HCT116 (cell line): ENCODE measurements at regions of chr6 and their contacts with region 1.

Region 1: DNA sequence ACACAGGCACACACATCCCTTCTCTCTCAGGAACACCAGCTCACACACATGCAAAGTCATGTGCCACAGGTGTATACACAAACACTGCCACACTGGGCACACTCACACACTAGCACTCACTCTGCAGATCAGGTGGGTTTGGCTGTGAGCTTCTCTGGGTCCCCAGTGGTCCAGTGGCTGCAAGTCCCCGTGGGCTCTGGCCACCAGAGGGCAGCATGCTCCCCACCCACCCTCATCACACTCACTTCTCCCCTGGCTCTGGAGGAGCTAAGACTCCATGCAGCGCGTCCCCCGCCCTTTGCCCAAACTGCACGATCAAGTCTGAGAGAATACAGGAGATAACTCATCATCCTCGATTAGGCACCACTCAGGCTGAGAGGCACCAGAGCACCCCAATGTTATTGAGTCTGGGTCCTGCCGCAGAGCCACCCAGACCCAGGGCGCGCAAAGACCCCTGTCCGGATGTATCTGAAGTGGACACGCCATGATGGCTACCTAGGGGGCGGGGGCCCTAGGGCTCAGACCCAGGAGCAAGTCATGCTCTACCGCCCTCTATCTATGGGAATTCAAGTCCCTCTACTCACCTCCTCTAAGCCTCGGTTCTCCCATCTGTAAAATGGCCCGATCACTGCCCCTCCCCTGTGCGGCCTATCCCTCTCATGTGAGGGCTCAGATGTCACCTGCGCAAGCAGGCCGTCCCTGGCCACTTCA is 90.5 kb downstream of the GRM4 start:
- DNase-seq: peak; percentile 55
- ATAC-seq: peak; percentile 77
- H3K4me3 ChIP-seq: no peak overlapping the region
- H3K27ac ChIP-seq: no peak overlapping the region
- H3K4me1 ChIP-seq: peaks cover 8 to 21% of the 10 kb centered on the region in 2 experiments; a peak in 3 of 4 replicates
- H3K27me3 ChIP-seq: no peaks in the 10 kb centered on the region
- CTCF ChIP-seq: peak; percentile 61 to 93 (median 91)
- POLR2A ChIP-seq: no peak
- RAD21 ChIP-seq: peak; percentile 61

Region 2: DNA sequence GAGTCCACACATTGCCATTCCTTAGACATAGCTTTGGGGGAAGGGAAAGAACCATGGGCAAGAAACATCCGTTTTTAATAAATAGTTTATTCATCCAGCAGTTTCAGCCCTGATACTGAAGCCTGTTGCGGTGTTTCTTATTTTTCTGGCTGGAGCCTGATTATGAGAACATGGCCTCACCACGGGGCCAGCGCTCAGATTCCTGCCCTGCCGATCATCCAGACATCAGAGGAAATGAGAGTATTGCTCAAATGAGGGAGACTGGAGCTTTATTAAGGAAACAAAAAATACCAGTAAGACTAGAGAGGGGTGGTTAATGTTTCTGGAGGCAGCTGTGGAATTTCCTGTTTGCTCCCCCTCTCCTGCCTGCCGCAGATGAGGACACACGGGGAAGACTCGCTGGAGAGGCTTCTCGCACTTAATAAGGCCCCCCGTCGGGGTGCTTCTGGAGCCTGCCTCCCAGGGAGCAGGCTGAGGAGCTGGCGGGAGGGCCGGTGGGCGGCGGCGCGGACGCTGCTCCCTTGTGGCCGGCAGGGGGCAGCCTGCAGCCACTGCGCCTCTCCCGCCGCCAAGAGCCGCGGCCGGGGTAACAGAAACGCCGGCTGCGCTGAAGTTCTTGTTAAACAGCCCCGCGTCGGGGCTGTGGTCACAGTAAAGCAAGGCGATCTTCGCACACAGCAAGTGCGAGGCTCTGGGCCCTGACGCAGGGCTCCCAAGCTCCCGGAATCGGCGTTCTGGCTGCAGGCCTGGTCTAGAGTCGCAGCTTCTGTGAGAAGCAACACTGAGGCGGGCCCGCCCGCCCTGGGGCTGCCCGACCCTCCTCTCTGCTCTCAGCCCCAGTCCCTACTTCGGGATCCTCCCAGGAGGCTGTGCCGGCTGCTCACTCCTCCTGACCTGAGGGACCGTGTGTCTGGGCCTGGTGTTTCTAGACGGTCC is 284.0 kb before region 1 on chr6:
- CTCF ChIA-PET with region 1: interaction called, 14 read pairs
- POLR2A ChIA-PET with region 1: no interaction called
- RAD21 ChIA-PET with region 1: interaction called in 1 of 2 experiments, 3 read pairs
- intact Hi-C with region 1: no loop called
- DNase-seq: peak; percentile 19
- ATAC-seq: peak; percentile 80
- H3K4me3 ChIP-seq: no peak overlapping the region
- H3K27ac ChIP-seq: peak overlapping the region; percentile 36
- H3K4me1 ChIP-seq: peaks cover 12 to 27% of the 10 kb centered on the region in 2 experiments
- H3K27me3 ChIP-seq: no peaks in the 10 kb centered on the region
- CTCF ChIP-seq: peak; percentile 80 to 92 (median 86)
- POLR2A ChIP-seq: no peak
- RAD21 ChIP-seq: peak; percentile 88

Region 3: GRCh38 chr6:34496103-34496685 is 440.8 kb after region 1 on chr6:
- CTCF ChIA-PET with region 1: no interaction called
- POLR2A ChIA-PET with region 1: no interaction called
- RAD21 ChIA-PET with region 1: no interaction called
- intact Hi-C with region 1: no loop called
- DNase-seq: no peak
- ATAC-seq: no peak
- H3K4me3 ChIP-seq: no peak overlapping the region
- H3K27ac ChIP-seq: no peak overlapping the region
- H3K4me1 ChIP-seq: peaks cover 0 to 2% of the 10 kb centered on the region in 2 experiments; a peak in 1 of 4 replicates
- H3K27me3 ChIP-seq: no peaks in the 10 kb centered on the region
- CTCF ChIP-seq: no peak
- POLR2A ChIP-seq: no peak
- RAD21 ChIP-seq: no peak